Gastrocnemius medialis (tissue), 4 donors: ENCODE measurements at regions of chr1 and their contacts with region 1.

Region 1: DNA sequence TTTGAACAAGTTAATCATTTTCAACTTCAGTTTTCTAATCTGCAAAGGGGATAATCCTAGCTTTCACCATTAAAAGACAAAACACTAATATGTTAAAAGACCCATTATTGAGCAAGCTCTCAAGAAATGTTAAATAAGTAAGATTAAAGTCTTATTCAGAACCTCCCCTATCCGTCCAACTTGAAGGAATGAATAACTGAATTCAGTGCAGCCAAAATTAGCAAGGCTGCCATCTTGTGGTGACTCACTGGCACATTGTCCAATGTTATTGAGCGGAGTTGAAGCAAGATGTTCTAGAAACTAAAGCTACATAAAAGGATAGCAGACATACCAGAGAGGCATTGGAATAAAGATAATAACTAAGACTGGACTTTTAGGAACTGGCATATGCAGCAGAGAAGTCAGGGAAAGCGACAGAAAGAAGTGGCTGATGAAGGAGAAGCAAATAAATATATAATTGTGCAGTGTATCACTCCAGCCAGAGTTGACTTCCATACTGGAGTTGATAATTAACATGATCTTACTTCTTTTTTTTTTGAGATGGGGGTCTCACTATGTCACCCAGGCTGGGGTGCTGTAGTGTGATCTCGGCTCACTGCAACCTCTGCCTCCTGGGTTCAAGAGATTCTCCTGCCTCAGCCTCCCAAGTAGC is 8.2 kb upstream of the CAP1 start:
- DNase-seq: peak; percentile 39 to 43
- ATAC-seq: peak; percentile 73 to 83
- H3K4me3 ChIP-seq: no peak overlapping the region
- H3K27ac ChIP-seq: no peak overlapping the region
- H3K4me1 ChIP-seq: peaks cover 19 to 25% of the 10 kb centered on the region in 2 donors
- H3K27me3 ChIP-seq: no peaks in the 10 kb centered on the region
- CTCF ChIP-seq: peak in 4 of 5 experiments; percentile 26 to 59 (median 44)
- POLR2A ChIP-seq: no peak

Region 2: DNA sequence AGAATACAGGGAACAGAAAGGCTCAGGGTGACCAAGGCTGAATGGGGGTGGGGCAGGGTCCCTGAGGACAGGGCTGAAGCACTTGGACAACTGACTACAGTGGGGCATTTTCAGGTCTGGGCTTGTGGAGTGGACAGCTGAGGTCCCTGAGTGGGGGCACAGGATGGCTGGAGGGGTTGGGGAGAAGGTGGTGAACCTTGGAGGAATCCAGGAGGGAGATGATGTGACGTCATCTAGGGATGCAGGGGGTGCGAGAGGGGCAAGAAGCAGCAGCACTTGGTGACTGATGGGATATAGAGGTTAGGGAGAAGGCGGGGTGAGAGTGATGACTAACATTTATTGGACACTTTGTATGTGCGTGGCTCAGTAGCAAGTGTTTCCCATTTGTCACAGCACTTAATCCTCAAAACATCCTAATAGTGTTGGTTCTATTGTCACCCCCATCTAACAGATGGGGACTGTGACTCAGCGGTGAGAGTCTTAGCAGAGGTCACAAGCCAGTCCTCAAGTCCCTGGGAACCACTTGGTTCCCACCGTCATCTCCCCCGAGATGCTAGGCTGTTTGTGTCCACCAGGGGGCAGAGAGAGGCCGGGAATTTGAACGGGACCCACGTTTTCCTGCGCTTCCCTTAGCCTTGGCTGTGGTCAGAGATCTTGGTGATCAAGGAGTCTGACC is 215.8 kb before region 1 on chr1:
- in situ Hi-C with region 1: loop called in 1 of 4 experiments (anchors 5 kb)
- intact Hi-C with region 1: loop called (anchors 2 kb)
- DNase-seq: peak; percentile 30 to 59
- ATAC-seq: peak; percentile 83 to 85
- H3K4me3 ChIP-seq: no peak overlapping the region
- H3K27ac ChIP-seq: no peak overlapping the region
- H3K4me1 ChIP-seq: no peaks in the 10 kb centered on the region
- H3K27me3 ChIP-seq: peaks cover 0 to 3% (median 0%) of the 10 kb centered on the region in 3 donors
- CTCF ChIP-seq: peak; percentile 76 to 94 (median 87)
- POLR2A ChIP-seq: no peak

Region 3: GRCh38 chr1:39919545-39919944 is 112.8 kb before region 1 on chr1:
- in situ Hi-C with region 1: loop called in 1 of 4 experiments (anchors 10 kb)
- intact Hi-C with region 1: loop called (anchors 2 kb)
- DNase-seq: no peak
- ATAC-seq: peak; percentile 77 to 82
- H3K4me3 ChIP-seq: no peak overlapping the region
- H3K27ac ChIP-seq: no peak overlapping the region
- H3K4me1 ChIP-seq: no peaks in the 10 kb centered on the region
- H3K27me3 ChIP-seq: peaks cover 0 to 8% (median 6%) of the 10 kb centered on the region in 3 donors
- CTCF ChIP-seq: peak in 4 of 5 experiments; percentile 21 to 63 (median 48)
- POLR2A ChIP-seq: no peak